ENCODE measurements at regions of chr1 and their contacts with region 1.

Region 1: GRCh38 chr1:27416387-27417111 is 24.1 kb downstream of the GPR3 start:
- DNase-seq: peak; percentile 63 to 79 (median 77)
- ATAC-seq: peak; percentile 89
- H3K4me3 ChIP-seq: no peak overlapping the region
- H3K27ac ChIP-seq: no peak overlapping the region; the same call in 2 of the 3 replicates
- H3K4me1 ChIP-seq: no peaks in the 10 kb centered on the region; a peak in 1 of 5 replicates
- H3K27me3 ChIP-seq: no peaks in the 10 kb centered on the region
- CTCF ChIP-seq: peak; percentile 73 to 81 (median 77)
- EP300 ChIP-seq: no peak
- POLR2A ChIP-seq: no peak
- RAD21 ChIP-seq: peak; percentile 63 to 80

Region 2: GRCh38 chr1:27402349-27402754 is 14.2 kb before region 1 on chr1:
- CTCF ChIA-PET with region 1: no interaction called
- POLR2A ChIA-PET with region 1: interaction called, 23 read pairs
- in situ Hi-C with region 1: no loop called
- intact Hi-C with region 1: no loop called
- DNase-seq: peak in 1 of 4 experiments; percentile 40
- ATAC-seq: peak; percentile 44
- H3K4me3 ChIP-seq: no peak overlapping the region
- H3K27ac ChIP-seq: no peak overlapping the region
- H3K4me1 ChIP-seq: peaks cover 0 to 23% of the 10 kb centered on the region in 2 experiments; a peak in 3 of 5 replicates
- H3K27me3 ChIP-seq: no peaks in the 10 kb centered on the region
- CTCF ChIP-seq: peak; percentile 38 to 50 (median 42); a peak in 4 of 6 replicates
- EP300 ChIP-seq: no peak
- POLR2A ChIP-seq: peak; percentile 60
- RAD21 ChIP-seq: peak in 1 of 2 experiments; percentile 40; a peak in 1 of 4 replicates

Region 3: GRCh38 chr1:27430903-27431600 is 14.5 kb after region 1 on chr1:
- CTCF ChIA-PET with region 1: no interaction called
- POLR2A ChIA-PET with region 1: interaction called, 17 read pairs
- in situ Hi-C with region 1: no loop called
- intact Hi-C with region 1: no loop called
- DNase-seq: peak in 3 of 4 experiments; percentile 24 to 51 (median 36)
- ATAC-seq: peak; percentile 3; the same call in 1 of the 3 replicates
- H3K4me3 ChIP-seq: no peak overlapping the region
- H3K27ac ChIP-seq: peak overlapping the region; percentile 52; the same call in 1 of the 3 replicates
- H3K4me1 ChIP-seq: peaks cover 21 to 71% of the 10 kb centered on the region in 2 experiments
- H3K27me3 ChIP-seq: no peaks in the 10 kb centered on the region
- CTCF ChIP-seq: peak in 1 of 3 experiments; percentile 26; a peak in 2 of 6 replicates
- EP300 ChIP-seq: no peak
- POLR2A ChIP-seq: no peak
- RAD21 ChIP-seq: peak in 1 of 2 experiments; percentile 35; a peak in 2 of 4 replicates

Region 4: DNA sequence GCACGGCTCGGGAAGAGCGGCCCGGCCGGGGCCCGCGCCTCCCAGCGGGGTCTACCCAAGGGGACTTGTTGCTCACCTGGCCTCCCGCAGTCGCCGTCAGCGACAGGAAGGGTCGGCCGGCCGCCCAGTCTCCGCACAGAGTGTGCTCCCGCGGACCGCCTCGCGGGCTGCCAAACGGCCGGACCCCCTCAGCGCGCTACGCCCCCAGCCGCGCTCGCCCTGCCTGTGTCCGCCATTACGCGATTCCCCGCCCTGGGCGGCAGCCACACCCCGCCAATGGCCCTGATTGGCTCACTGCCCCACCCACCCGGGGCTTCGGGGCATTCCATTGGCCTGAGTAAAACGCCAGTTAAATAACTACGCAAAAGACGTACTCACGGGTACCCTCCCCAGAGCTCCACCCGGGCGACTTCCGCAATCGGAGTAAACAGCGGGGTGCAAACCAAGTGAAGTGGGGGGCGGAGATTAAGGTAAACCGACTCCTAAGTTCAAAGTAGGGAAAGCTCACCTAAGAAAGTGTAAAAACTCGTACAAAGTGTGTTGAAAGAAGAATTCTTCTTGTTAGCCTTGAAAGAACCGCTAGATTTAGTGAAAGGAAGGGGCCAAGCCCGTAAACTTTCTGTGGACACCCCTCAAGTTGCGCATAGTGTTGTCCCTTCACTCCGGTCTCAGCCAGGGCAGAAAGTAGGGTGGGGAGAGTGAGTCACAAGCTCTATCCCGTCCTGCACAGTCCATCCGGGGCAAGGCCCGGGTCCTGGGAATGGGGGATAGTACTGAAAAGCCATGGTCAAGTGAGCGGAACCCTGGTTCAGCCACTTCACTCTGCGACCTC is 73.6 kb after region 1 on chr1 and contains the start of gene WASF2:
- CTCF ChIA-PET with region 1: no interaction called
- POLR2A ChIA-PET with region 1: interaction called, 8 read pairs
- in situ Hi-C with region 1: no loop called
- intact Hi-C with region 1: loop called (anchors 5 kb)
- DNase-seq: peak; percentile 93 to 99 (median 98)
- ATAC-seq: peak; percentile 96
- H3K4me3 ChIP-seq: peak within 1 kb of the TSS; percentile 79
- H3K27ac ChIP-seq: peak within 1 kb of the TSS; percentile 99
- H3K4me1 ChIP-seq: peaks cover 8 to 25% of the 10 kb centered on the region in 2 experiments; a peak in 4 of 5 replicates
- H3K27me3 ChIP-seq: no peaks in the 10 kb centered on the region
- CTCF ChIP-seq: no peak; a peak in 1 of 6 replicates
- EP300 ChIP-seq: peak; percentile 5
- POLR2A ChIP-seq: peak; percentile 92
- RAD21 ChIP-seq: 0 out of 4 replicates have a peak, but pooled peaks of 1 of the 2 experiments have one; percentile 13
- polyA plus RNA-seq, gene WASF2: 8.2 to 9.7 TPM

Region 5: GRCh38 chr1:27689423-27690173 is 273.0 kb after region 1 on chr1:
- CTCF ChIA-PET with region 1: no interaction called
- POLR2A ChIA-PET with region 1: no interaction called
- in situ Hi-C with region 1: no loop called
- intact Hi-C with region 1: no loop called
- DNase-seq: no peak
- ATAC-seq: no peak
- H3K4me3 ChIP-seq: no peak overlapping the region
- H3K27ac ChIP-seq: no peak overlapping the region
- H3K4me1 ChIP-seq: peaks cover 0 to 9% of the 10 kb centered on the region in 2 experiments; a peak in 2 of 5 replicates
- H3K27me3 ChIP-seq: peaks cover 4 to 13% of the 10 kb centered on the region in 2 experiments; a peak in 2 of 5 replicates
- CTCF ChIP-seq: no peak
- EP300 ChIP-seq: no peak
- POLR2A ChIP-seq: no peak
- RAD21 ChIP-seq: no peak

Measured in K562 (cell line).